ENCODE measurements at regions of chr10 and their contacts with region 1.

Region 1: GRCh38 chr10:45464958-45465567 is 91.0 kb downstream of the ALOX5 start:
- DNase-seq: peak; percentile 71 to 89 (median 82)
- H3K4me3 ChIP-seq: peak overlapping the region in 2 of 59 donors; percentile 5 to 10
- H3K27ac ChIP-seq: peak overlapping the region in 9 of 59 donors; percentile 13 to 74 (median 40)
- H3K27me3 ChIP-seq: no peaks in the 10 kb centered on the region
- CTCF ChIP-seq: peak; percentile 75 to 96 (median 89)

Region 2: DNA sequence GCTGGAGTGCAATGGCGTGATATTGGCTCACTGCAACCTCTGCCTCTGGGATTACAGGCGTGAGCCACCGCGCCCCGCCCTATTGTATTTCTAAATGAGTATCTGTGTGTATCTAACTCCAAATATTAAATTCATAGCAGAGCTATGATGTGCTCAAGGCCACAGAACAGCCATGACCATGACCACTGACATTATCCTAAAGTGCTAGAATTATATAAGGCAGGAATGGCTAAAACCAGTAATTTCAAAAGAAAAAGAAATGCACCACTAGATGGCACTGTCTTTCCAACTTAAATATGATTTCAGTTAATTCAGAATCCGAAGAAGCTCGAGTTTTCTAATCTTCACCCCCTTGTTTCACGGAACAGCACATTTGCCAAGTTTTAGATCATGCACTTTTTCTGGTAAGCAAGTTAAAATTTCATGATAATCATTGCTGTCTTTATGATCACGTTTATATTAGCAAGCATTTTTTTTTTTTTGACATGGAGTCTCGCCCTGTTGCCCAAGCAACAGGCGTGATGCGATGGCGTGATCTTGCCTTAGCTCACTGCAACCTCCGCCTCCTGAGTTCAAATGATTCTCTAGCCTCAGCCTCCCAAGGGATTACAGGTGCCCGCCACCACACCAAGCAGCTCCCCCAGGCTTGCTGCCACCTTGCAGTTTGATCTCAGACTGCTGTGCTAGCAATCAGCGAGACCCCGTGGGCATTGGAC is 214.9 kb before region 1 on chr10:
- intact Hi-C with region 1: loop called (anchors 5 kb)
- DNase-seq: peak in 2 of 10 donors; percentile 10 to 15
- H3K4me3 ChIP-seq: peak overlapping the region in 46 of 59 donors; percentile 3 to 49 (median 28)
- H3K27ac ChIP-seq: no peak overlapping the region
- H3K27me3 ChIP-seq: peaks cover 0 to 3% (median 0%) of the 10 kb centered on the region in 45 donors
- CTCF ChIP-seq: peak; percentile 62 to 87 (median 77)

Region 3: GRCh38 chr10:45514291-45515270 is 49.5 kb after region 1 on chr10:
- intact Hi-C with region 1: loop called in 1 of 2 experiments (anchors 10 kb)
- DNase-seq: peak; percentile 16 to 79 (median 68)
- H3K4me3 ChIP-seq: peak overlapping the region; percentile 0 to 59 (median 30)
- H3K27ac ChIP-seq: peak overlapping the region in 29 of 59 donors; percentile 2 to 73 (median 39)
- H3K27me3 ChIP-seq: no peaks in the 10 kb centered on the region
- CTCF ChIP-seq: no peak

Region 4: DNA sequence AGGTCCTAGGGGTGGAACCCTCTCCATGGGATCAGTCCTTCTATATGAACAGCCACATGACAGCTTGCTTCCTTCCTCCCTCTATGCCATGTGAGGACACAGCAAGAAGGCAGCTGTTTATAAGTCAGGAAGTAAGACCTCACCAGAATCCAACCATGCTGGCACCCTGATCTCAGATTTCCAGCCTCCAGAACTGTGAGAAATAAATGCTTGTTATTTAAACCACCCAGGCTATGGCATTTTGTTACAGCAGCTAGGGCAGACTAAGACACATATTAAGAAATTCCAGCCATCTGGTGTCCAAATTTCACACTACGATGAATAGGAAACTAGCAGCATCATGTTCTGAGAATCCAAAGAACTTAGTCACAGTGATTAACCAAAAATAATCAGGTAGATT is 67.4 kb after region 1 on chr10:
- intact Hi-C with region 1: no loop called
- DNase-seq: no peak
- H3K4me3 ChIP-seq: no peak overlapping the region
- H3K27ac ChIP-seq: no peak overlapping the region
- H3K27me3 ChIP-seq: no peaks in the 10 kb centered on the region
- CTCF ChIP-seq: no peak

Region 5: GRCh38 chr10:45672181-45673073 is 207.4 kb after region 1 on chr10 and contains the start of gene ZFAND4:
- intact Hi-C with region 1: loop called (anchors 2 to 5 kb)
- DNase-seq: peak; percentile 89 to 95 (median 94)
- H3K4me3 ChIP-seq: peak within 1 kb of the TSS; percentile 57 to 90 (median 79)
- H3K27ac ChIP-seq: peak within 1 kb of the TSS; percentile 22 to 93 (median 80)
- H3K27me3 ChIP-seq: peaks cover 0 to 4% (median 0%) of the 10 kb centered on the region in 45 donors
- CTCF ChIP-seq: peak; percentile 6 to 86 (median 62)
- total RNA-seq, gene ZFAND4: 7.6 to 23.3 (median 13.3) TPM

Measured in dorsolateral prefrontal cortex (tissue), 120 donors.